ENCODE measurements at regions of chr16 and their contacts with region 1.

Region 1: DNA sequence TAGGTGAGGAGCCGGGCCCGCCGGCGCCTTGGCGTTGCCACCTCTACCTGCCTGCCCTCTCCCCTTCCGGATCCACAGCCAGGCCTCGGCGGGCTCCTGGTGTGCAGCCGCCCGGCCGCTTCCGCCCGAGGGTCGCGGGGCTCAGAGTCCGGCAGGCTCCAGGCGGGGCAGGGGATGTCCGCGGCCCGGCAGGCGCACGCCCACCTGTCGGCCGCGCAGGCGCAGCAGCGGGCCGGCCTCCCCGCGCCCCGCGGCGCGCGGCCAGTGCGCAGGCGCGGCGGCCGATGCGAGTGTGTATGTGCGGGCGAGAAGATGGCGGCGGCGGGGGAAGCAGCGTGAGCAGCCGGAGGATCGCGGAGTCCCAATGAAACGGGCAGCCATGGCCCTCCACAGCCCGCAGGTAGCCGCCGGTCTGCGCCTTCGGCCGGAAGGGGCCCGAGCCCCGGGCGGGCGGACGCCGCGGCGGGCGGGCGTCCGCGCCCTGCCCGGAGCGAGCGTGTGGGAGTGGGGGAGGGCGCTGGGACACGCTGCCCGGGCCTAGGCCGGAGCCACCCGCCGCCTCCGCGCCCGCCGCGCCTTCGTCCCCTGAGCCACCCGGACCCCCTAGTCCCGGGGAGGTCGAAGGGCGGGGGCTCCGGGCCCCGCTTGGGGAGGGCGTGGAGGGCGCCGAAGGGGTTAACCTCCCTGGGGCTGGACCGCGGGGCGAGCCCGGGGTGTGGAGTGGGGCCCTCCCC is at the start of gene USP10:
- DNase-seq: no peak
- ATAC-seq: peak; percentile 82
- H3K4me3 ChIP-seq: peak within 1 kb of the TSS; percentile 91
- H3K27ac ChIP-seq: peak within 1 kb of the TSS; percentile 86
- H3K4me1 ChIP-seq: peaks cover 3% of the 10 kb centered on the region; the same call in 1 of the 2 replicates
- H3K27me3 ChIP-seq: no peaks in the 10 kb centered on the region
- CTCF ChIP-seq: no peak
- EP300 ChIP-seq: no peak
- POLR2A ChIP-seq: peak; percentile 93
- RAD21 ChIP-seq: no peak
- polyA plus RNA-seq, gene USP10: 46.1 to 47.7 TPM

Region 2: DNA sequence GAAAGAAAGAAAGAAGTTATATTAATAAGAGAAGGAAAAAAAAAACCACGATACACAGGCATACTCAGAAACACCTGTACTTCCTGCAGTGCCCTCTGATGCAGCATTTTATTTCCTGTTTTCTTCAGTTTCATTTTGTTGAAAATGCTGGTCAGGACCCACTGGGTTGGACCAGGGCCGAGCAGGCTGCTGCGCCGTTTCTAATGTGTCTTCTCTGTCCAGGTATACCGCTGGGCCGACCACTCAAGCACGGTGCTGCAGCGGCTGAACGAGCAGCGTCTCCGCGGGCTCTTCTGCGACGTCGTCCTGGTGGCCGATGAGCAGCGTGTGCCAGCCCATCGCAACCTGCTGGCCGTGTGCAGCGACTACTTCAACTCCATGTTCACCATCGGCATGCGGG is 43.2 kb before region 1 on chr16:
- CTCF ChIA-PET with region 1: no interaction called
- POLR2A ChIA-PET with region 1: no interaction called
- RAD21 ChIA-PET with region 1: no interaction called
- SMC1A ChIA-PET with region 1: no interaction called
- in situ Hi-C with region 1: no loop called
- intact Hi-C with region 1: no loop called
- DNase-seq: no peak
- ATAC-seq: peak; percentile 41; the same call in 2 of the 3 replicates
- H3K4me3 ChIP-seq: no peak overlapping the region
- H3K27ac ChIP-seq: no peak overlapping the region
- H3K4me1 ChIP-seq: peaks cover 3% of the 10 kb centered on the region
- H3K27me3 ChIP-seq: no peaks in the 10 kb centered on the region
- CTCF ChIP-seq: no peak
- EP300 ChIP-seq: no peak
- POLR2A ChIP-seq: no peak
- RAD21 ChIP-seq: no peak

Region 3: GRCh38 chr16:84714028-84714427 is 14.1 kb after region 1 on chr16:
- CTCF ChIA-PET with region 1: interaction called, 5 read pairs
- POLR2A ChIA-PET with region 1: interaction called, 5 read pairs
- RAD21 ChIA-PET with region 1: interaction called, 12 read pairs
- SMC1A ChIA-PET with region 1: interaction called, 9 read pairs
- in situ Hi-C with region 1: no loop called
- intact Hi-C with region 1: no loop called
- DNase-seq: no peak
- ATAC-seq: no peak; the same call in 2 of the 3 replicates
- H3K4me3 ChIP-seq: no peak overlapping the region
- H3K27ac ChIP-seq: no peak overlapping the region
- H3K4me1 ChIP-seq: peaks cover 9% of the 10 kb centered on the region
- H3K27me3 ChIP-seq: no peaks in the 10 kb centered on the region
- CTCF ChIP-seq: no peak
- EP300 ChIP-seq: no peak
- POLR2A ChIP-seq: no peak
- RAD21 ChIP-seq: no peak

Measured in GM12878 (cell line).